Caco-2 (cell line): ENCODE measurements at regions of chr6 and their contacts with region 1.

Region 1: DNA sequence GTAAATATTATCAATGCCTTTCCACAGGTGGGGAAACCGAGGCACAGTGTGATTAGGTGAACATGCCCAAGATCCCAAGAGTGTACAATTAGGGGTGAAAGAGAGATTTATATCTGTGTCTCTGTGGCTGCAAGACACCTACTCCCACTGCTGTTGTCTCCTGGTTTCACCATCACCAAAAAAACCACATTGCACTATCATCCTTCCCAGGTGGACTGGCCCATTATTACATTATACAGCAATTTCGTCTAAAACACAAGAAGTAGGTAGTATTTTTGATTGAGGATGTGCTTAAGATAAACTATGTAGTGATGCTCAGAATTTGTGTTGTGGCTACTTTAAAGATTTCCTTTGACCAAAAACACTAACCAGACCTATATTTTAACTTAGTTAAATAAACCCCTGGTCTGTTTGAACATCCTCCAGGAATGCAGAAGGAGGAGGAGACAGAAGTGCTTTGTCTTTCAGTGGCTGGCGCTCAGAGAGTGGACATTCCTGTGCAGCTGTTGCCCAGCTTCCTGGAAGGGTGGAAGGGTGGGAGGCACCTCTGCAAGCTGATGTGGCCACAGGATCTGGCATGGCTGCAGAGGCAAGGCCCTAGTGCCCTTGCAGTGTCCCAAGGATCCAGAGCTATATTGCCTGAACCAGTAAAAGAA is 23.8 kb downstream of the DCBLD1 start:
- DNase-seq: peak; percentile 55 to 67
- H3K4me3 ChIP-seq: no peak overlapping the region
- H3K4me3 Mint-ChIP-seq: peak overlapping the region; percentile 34
- H3K27ac Mint-ChIP-seq: peak overlapping the region; percentile 76
- H3K4me1 ChIP-seq: peaks cover 90% of the 10 kb centered on the region
- H3K4me1 Mint-ChIP-seq: peaks cover 73% of the 10 kb centered on the region
- H3K27me3 ChIP-seq: no peaks in the 10 kb centered on the region
- H3K27me3 Mint-ChIP-seq: no peaks in the 10 kb centered on the region
- CTCF ChIP-seq: no peak

Region 2: DNA sequence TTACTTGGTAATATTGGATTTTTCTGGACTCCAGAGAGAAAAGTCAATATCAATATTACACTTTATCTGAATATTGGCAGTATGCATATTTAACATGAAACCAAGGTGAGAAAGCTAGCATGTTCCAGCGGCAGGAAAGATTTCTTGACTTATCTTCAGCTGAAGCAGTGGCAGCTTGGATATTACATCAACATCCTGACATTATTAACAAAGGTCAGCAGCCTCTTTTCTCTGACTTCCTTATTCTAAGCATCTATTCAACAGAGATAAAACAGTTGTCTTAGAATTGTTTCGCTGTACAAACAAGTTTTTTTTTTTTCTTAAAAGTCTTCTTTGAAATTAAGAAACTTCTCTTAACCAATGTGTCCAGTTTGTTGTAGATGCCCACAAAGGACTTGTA is 12.0 kb before region 1 on chr6:
- CTCF ChIA-PET with region 1: no interaction called
- POLR2A ChIA-PET with region 1: no interaction called
- intact Hi-C with region 1: loop called (anchors 1 kb)
- DNase-seq: no peak
- H3K4me3 ChIP-seq: no peak overlapping the region
- H3K4me3 Mint-ChIP-seq: no peak overlapping the region
- H3K27ac Mint-ChIP-seq: no peak overlapping the region
- H3K4me1 ChIP-seq: peaks cover 27% of the 10 kb centered on the region
- H3K4me1 Mint-ChIP-seq: peaks cover 28% of the 10 kb centered on the region
- H3K27me3 ChIP-seq: no peaks in the 10 kb centered on the region
- H3K27me3 Mint-ChIP-seq: no peaks in the 10 kb centered on the region
- CTCF ChIP-seq: no peak